ENCODE measurements at regions of chr16 and their contacts with region 1.

Region 1: DNA sequence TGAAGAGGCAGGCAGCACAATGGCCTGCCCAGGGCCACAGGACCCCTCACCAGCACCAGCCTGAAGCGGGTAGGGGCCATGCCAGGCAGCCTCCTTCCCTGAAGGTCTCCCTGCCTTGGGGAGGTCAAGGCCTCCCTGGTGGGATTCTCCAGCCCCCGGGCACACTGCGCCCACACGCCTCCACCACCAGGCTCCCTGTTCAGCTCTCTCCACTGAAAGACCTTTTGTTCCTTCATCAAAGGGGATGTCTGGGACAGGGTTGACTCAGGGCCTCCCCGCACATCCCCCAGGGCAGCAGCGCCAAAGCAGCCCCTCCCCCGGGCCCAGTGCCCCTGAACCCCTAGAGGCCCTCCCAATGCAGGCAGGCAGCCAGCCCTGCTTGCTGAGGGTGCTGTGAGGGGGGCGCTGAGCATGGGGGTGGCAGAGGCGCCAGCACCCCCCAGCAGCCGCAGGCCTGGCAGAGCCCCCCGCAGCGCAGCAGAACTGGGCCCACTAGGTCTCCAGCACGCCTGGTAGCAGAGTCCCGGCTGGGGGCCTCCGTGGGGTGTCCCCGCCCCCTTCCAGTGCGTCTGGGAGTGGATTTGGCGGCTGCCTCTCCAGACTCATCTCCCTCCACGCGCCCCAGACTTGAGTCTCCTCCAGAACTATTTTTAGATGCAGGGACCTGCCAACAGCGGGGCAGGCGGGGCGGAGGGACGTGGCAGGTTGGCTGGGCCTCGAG is 13.1 kb downstream of the BCAR1 start:
- DNase-seq: no peak
- ATAC-seq: no peak
- H3K4me3 ChIP-seq: no peak overlapping the region
- H3K27ac ChIP-seq: peak overlapping the region; percentile 48 to 84; a peak in 5 of 6 replicates
- H3K4me1 ChIP-seq: peaks cover 39% of the 10 kb centered on the region
- CTCF ChIP-seq: no peak
- EP300 ChIP-seq: no peak
- POLR2A ChIP-seq: no peak
- RAD21 ChIP-seq: no peak

Region 2: GRCh38 chr16:75148311-75149195 is 89.7 kb before region 1 on chr16 and contains the start of gene ZFP1:
- CTCF ChIA-PET with region 1: no interaction called
- POLR2A ChIA-PET with region 1: no interaction called
- DNase-seq: peak; percentile 93
- ATAC-seq: peak; percentile 91 to 97
- H3K4me3 ChIP-seq: peak within 1 kb of the TSS; percentile 98
- H3K27ac ChIP-seq: peak within 1 kb of the TSS; percentile 94 to 100
- H3K4me1 ChIP-seq: no peaks in the 10 kb centered on the region
- CTCF ChIP-seq: no peak
- EP300 ChIP-seq: no peak
- POLR2A ChIP-seq: peak; percentile 61
- RAD21 ChIP-seq: no peak
- polyA plus RNA-seq, gene ZFP1: 14.0 and 16.1 TPM in 2 replicates

Region 3: DNA sequence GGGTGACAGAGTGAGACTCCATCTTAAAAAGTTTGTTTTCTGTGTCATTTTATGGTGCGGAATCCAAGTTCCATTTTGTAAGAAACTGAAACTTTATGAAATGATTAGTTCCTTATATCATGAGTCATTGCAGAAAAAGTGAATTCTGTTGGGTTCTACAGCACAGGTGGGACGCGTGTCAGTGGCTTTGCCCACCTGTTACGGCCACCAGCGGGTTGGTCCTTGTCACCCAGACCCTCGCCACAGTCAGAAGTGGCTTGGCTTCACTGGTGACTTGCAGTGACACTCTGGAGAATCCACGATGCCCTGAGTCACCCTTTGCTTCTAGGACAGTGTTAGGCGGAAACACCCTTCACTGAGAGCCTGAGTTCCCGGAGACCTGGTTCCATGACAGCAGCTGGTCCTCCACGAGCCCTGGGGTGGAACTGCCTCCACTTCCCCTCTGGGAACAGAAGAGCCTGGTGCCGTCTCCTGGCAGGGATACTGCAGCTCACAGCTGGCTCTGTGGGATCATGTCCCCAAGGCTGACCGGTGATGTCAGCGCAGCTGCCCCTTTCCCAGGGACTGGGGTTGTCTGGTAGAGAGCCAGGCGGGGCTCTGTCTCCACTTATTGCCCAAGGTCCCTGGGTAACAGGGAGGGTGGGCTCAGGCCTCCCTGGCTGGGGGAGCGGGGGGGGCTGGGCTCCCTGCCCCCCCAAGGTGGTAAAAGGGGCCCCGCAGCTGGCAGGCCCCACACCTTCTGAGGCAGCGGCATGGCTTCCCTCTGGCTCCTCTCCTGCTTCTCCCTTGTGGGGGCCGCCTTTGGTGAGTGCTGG is 19.8 kb before region 1 on chr16 and contains the start of gene CTRB1:
- CTCF ChIA-PET with region 1: interaction called, 36 read pairs
- POLR2A ChIA-PET with region 1: no interaction called
- DNase-seq: no peak
- ATAC-seq: peak in 1 of 2 experiments; percentile 44; a peak in 1 of 6 replicates
- H3K4me3 ChIP-seq: no peak within 1 kb of the TSS
- H3K27ac ChIP-seq: no peak within 1 kb of the TSS
- H3K4me1 ChIP-seq: no peaks in the 10 kb centered on the region
- CTCF ChIP-seq: no peak
- EP300 ChIP-seq: no peak
- POLR2A ChIP-seq: no peak
- RAD21 ChIP-seq: no peak
- polyA plus RNA-seq, gene CTRB1: not detected in 2 replicates

Region 4: GRCh38 chr16:75272097-75272551 is 33.8 kb after region 1 on chr16:
- CTCF ChIA-PET with region 1: interaction called, 31 read pairs
- POLR2A ChIA-PET with region 1: no interaction called
- DNase-seq: no peak
- ATAC-seq: no peak
- H3K4me3 ChIP-seq: no peak overlapping the region
- H3K27ac ChIP-seq: no peak overlapping the region
- H3K4me1 ChIP-seq: peaks cover 29% of the 10 kb centered on the region
- CTCF ChIP-seq: no peak
- EP300 ChIP-seq: no peak
- POLR2A ChIP-seq: no peak
- RAD21 ChIP-seq: no peak

Region 5: DNA sequence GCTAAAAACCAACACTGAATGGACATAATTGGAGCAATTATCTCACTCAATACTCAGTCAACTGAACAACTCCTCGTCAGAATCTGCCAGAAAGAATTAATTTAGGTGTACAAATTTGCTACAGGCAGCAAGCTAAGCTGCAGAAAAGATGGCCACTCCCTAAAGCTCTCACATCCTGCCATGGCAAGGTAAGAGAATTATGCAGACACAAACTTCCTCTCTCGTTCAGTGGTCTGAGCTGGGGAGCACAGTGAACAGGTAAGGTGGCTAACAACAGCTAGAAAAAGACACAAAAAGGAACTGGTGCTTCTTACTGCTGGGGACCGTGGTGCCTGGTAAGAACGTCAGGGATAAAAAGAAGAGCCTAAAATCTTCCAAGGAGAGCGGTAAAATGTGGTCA is 88.0 kb after region 1 on chr16:
- CTCF ChIA-PET with region 1: interaction called, 23 read pairs
- POLR2A ChIA-PET with region 1: no interaction called
- DNase-seq: no peak
- ATAC-seq: no peak
- H3K4me3 ChIP-seq: no peak overlapping the region
- H3K27ac ChIP-seq: no peak overlapping the region
- H3K4me1 ChIP-seq: no peaks in the 10 kb centered on the region
- CTCF ChIP-seq: no peak
- EP300 ChIP-seq: no peak
- POLR2A ChIP-seq: no peak
- RAD21 ChIP-seq: no peak

Region 6: DNA sequence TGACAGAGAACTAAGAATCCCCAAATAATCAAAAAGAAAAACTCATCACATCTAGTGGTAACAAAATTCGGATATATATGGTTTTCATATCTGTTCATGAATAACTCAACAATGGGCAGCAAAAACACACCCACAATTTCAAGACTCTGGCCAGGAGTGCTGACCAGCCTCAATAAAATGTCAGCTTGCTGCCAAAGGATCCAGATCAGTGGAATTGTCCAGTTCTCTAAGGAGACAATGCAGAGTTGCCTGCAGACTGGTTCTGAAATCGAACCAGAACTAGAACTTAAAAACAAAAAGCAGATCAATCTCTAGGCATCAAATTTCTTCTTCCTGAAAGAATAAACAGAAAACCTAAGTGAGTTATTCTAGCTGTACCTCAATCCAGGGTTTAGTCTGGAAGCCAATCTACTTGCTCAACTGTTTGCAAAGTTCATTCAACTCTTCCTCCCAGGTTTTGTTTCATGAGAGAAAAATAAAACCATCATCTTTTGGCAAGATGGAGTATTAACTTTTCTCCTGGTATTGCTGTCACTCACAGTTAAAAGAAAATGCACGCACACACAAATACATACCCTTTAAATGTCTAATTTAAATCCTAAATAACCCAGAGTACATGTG is 134.1 kb after region 1 on chr16:
- CTCF ChIA-PET with region 1: interaction called, 43 read pairs
- POLR2A ChIA-PET with region 1: no interaction called
- DNase-seq: no peak
- ATAC-seq: no peak
- H3K4me3 ChIP-seq: no peak overlapping the region
- H3K27ac ChIP-seq: no peak overlapping the region
- H3K4me1 ChIP-seq: peaks cover 21% of the 10 kb centered on the region; the same call in 2 of the 3 replicates
- CTCF ChIP-seq: no peak
- EP300 ChIP-seq: no peak
- POLR2A ChIP-seq: no peak
- RAD21 ChIP-seq: no peak

Region 7: GRCh38 chr16:75392911-75393310 is 154.6 kb after region 1 on chr16:
- CTCF ChIA-PET with region 1: interaction called, 171 read pairs
- POLR2A ChIA-PET with region 1: no interaction called
- DNase-seq: no peak
- ATAC-seq: no peak
- H3K4me3 ChIP-seq: no peak overlapping the region
- H3K27ac ChIP-seq: no peak overlapping the region
- H3K4me1 ChIP-seq: no peaks in the 10 kb centered on the region
- CTCF ChIP-seq: no peak
- EP300 ChIP-seq: no peak
- POLR2A ChIP-seq: no peak
- RAD21 ChIP-seq: no peak